HAP-1 (cell line): ENCODE measurements at regions of chr1 and their contacts with region 1.

Region 1: GRCh38 chr1:114418247-114418646 is 92.8 kb downstream of the TRIM33 start:
- DNase-seq: no peak
- H3K4me3 ChIP-seq: no peak overlapping the region
- H3K4me1 ChIP-seq: no peaks in the 10 kb centered on the region; the same call in 1 of the 2 replicates
- H3K27me3 ChIP-seq: no peaks in the 10 kb centered on the region

Region 2: DNA sequence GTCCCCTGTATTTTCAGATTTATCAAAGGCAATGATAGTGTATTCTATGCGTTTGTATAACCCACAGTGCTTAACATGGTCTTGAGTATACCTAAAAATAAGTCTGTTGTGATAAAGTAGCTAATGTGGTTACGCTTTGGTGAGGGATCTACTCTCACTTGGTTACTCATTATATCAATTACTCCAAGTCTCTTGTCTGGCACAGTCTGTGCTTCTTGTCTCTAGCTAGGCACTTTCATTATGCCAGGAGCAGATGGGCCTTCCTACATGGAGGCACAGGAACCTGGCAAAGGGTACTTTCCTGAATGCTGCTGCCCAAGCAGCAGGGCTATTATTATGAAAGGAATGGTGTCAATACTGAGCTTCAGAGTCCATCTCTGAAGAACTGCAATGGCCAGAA is 542.5 kb before region 1 on chr1:
- in situ Hi-C with region 1: no loop called
- DNase-seq: no peak
- H3K4me3 ChIP-seq: no peak overlapping the region
- H3K4me1 ChIP-seq: no peaks in the 10 kb centered on the region
- H3K27me3 ChIP-seq: no peaks in the 10 kb centered on the region

Region 3: GRCh38 chr1:113963281-113963906 is 454.9 kb before region 1 on chr1:
- in situ Hi-C with region 1: loop called (anchors 25 kb)
- DNase-seq: no peak
- H3K4me3 ChIP-seq: no peak overlapping the region
- H3K4me1 ChIP-seq: peaks cover 8% of the 10 kb centered on the region
- H3K27me3 ChIP-seq: no peaks in the 10 kb centered on the region